Caco-2 (cell line): ENCODE measurements at regions of chr4 and their contacts with region 1.

Region 1: GRCh38 chr4:107930821-107931774 is at the start of gene CYP2U1:
- DNase-seq: peak; percentile 81 to 86
- H3K4me3 ChIP-seq: peak within 1 kb of the TSS; percentile 52
- H3K4me3 Mint-ChIP-seq: peak within 1 kb of the TSS; percentile 85
- H3K27ac Mint-ChIP-seq: no peak within 1 kb of the TSS
- H3K4me1 ChIP-seq: 0 out of 2 replicates have a peak, but pooled peaks cover 3% of the 10 kb centered on the region
- H3K4me1 Mint-ChIP-seq: peaks cover 14% of the 10 kb centered on the region
- H3K27me3 ChIP-seq: no peaks in the 10 kb centered on the region
- H3K27me3 Mint-ChIP-seq: peaks cover 8% of the 10 kb centered on the region
- CTCF ChIP-seq: no peak
- total RNA-seq, gene CYP2U1: 1.4 and 1.7 TPM in 2 replicates

Region 2: GRCh38 chr4:107888237-107888636 is 42.9 kb before region 1 on chr4:
- CTCF ChIA-PET with region 1: no interaction called
- POLR2A ChIA-PET with region 1: no interaction called
- intact Hi-C with region 1: no loop called
- DNase-seq: peak in 1 of 2 experiments; percentile 9
- H3K4me3 ChIP-seq: no peak overlapping the region
- H3K4me3 Mint-ChIP-seq: no peak overlapping the region
- H3K27ac Mint-ChIP-seq: no peak overlapping the region
- H3K4me1 ChIP-seq: no peaks in the 10 kb centered on the region
- H3K4me1 Mint-ChIP-seq: no peaks in the 10 kb centered on the region
- H3K27me3 ChIP-seq: no peaks in the 10 kb centered on the region
- H3K27me3 Mint-ChIP-seq: no peaks in the 10 kb centered on the region
- CTCF ChIP-seq: no peak

Region 3: GRCh38 chr4:107951551-107951950 is 20.5 kb after region 1 on chr4:
- CTCF ChIA-PET with region 1: no interaction called
- POLR2A ChIA-PET with region 1: no interaction called
- intact Hi-C with region 1: no loop called
- DNase-seq: no peak
- H3K4me3 ChIP-seq: no peak overlapping the region
- H3K4me3 Mint-ChIP-seq: no peak overlapping the region
- H3K27ac Mint-ChIP-seq: no peak overlapping the region
- H3K4me1 ChIP-seq: no peaks in the 10 kb centered on the region
- H3K4me1 Mint-ChIP-seq: no peaks in the 10 kb centered on the region
- H3K27me3 ChIP-seq: no peaks in the 10 kb centered on the region
- H3K27me3 Mint-ChIP-seq: no peaks in the 10 kb centered on the region
- CTCF ChIP-seq: no peak

Region 4: DNA sequence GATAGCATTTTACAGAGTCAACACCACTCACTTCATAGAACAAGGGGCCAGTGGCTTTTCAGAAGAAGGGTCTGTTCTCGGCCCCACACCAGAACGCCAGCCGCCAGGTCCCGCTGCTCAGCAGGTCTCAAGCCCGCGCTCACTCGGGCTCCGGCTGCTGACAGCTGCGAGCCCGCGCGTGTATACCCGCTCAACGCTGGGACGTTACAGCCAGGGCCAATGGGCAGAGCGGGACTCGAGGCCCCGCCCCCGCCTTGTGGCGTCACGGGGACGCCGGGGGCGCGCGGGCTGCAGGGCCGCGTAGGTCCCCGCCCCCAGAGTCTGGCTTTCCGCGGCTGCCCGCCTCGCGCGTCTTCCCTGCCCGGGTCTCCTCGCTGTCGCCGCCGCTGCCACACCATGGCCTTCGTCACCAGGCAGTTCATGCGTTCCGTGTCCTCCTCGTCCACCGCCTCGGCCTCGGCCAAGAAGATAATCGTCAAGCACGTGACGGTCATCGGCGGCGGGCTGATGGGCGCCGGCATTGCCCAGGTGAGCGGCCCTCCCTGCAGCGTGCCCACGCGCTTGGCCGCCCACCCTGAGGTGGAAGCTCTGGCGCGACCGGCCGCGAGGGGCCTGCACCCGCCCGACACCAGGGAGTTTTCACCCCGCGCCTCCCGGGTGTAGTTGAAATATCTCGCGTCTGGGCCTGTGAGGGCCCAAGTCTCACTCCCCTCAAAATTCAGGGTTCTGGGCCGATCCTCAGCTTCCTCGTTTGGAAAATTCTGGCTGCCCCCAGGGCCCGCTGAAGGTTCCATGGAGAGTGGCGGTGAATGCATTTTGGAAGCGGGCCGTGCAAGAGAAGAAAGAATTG is 58.7 kb after region 1 on chr4 and contains the start of gene HADH:
- CTCF ChIA-PET with region 1: no interaction called
- POLR2A ChIA-PET with region 1: no interaction called
- intact Hi-C with region 1: loop called (anchors 5 kb)
- DNase-seq: peak; percentile 89 to 94
- H3K4me3 ChIP-seq: peak within 1 kb of the TSS; percentile 95
- H3K4me3 Mint-ChIP-seq: peak within 1 kb of the TSS; percentile 90
- H3K27ac Mint-ChIP-seq: peak within 1 kb of the TSS; percentile 79
- H3K4me1 ChIP-seq: no peaks in the 10 kb centered on the region
- H3K4me1 Mint-ChIP-seq: peaks cover 13% of the 10 kb centered on the region
- H3K27me3 ChIP-seq: no peaks in the 10 kb centered on the region
- H3K27me3 Mint-ChIP-seq: no peaks in the 10 kb centered on the region
- CTCF ChIP-seq: no peak
- total RNA-seq, gene HADH: 35.8 and 38.1 TPM in 2 replicates

Region 5: GRCh38 chr4:108181704-108182103 is 250.6 kb after region 1 on chr4:
- CTCF ChIA-PET with region 1: no interaction called
- POLR2A ChIA-PET with region 1: interaction called, 21 read pairs
- intact Hi-C with region 1: no loop called
- DNase-seq: no peak
- H3K4me3 ChIP-seq: no peak overlapping the region
- H3K4me3 Mint-ChIP-seq: no peak overlapping the region
- H3K27ac Mint-ChIP-seq: no peak overlapping the region
- H3K4me1 ChIP-seq: no peaks in the 10 kb centered on the region
- H3K4me1 Mint-ChIP-seq: no peaks in the 10 kb centered on the region
- H3K27me3 ChIP-seq: no peaks in the 10 kb centered on the region
- H3K27me3 Mint-ChIP-seq: peaks cover 8% of the 10 kb centered on the region
- CTCF ChIP-seq: peak; percentile 41 to 45

Region 6: DNA sequence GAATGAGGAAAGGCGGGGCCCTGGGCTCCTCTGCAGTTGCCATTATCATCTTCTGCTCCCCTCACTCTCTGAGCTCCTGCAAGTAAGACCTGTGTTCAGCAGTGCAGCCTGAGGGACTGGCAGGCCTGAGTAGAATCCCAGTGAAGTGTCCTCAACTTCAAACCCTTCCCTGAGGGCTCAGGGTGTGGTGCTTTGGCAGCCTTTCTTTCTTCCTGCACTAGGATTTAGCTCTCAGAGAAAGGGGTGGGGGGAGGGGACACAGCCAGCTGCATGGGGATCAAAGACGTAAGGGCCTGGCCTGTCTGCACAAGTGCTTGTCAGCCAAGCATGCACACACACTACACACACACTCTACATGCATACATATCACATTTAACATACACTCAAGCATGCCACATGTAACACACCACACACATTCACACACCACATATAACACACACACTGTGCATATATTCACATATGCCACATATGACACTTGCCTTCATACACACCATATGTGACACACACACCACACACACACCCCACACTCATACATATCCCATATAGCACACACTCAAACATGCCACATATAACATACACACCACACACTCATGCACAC is 465.9 kb after region 1 on chr4:
- CTCF ChIA-PET with region 1: no interaction called
- POLR2A ChIA-PET with region 1: no interaction called
- intact Hi-C with region 1: no loop called
- DNase-seq: no peak
- H3K4me3 ChIP-seq: no peak overlapping the region
- H3K4me3 Mint-ChIP-seq: no peak overlapping the region
- H3K27ac Mint-ChIP-seq: no peak overlapping the region
- H3K4me1 ChIP-seq: no peaks in the 10 kb centered on the region
- H3K4me1 Mint-ChIP-seq: no peaks in the 10 kb centered on the region
- H3K27me3 ChIP-seq: no peaks in the 10 kb centered on the region
- H3K27me3 Mint-ChIP-seq: no peaks in the 10 kb centered on the region
- CTCF ChIP-seq: no peak